ENCODE measurements at regions of chr18 and their contacts with region 1.

Region 1: GRCh38 chr18:32470713-32471633 is at the start of gene GAREM1:
- DNase-seq: peak; percentile 95
- total RNA-seq, gene GAREM1: 10.0 TPM

Region 2: GRCh38 chr18:32158108-32158624 is 312.8 kb before region 1 on chr18:
- intact Hi-C with region 1: loop called (anchors 5 kb)
- DNase-seq: no peak

Region 3: GRCh38 chr18:32271672-32272208 is 199.2 kb before region 1 on chr18:
- intact Hi-C with region 1: loop called (anchors 1 kb)
- DNase-seq: no peak

Region 4: GRCh38 chr18:32289483-32290075 is 181.4 kb before region 1 on chr18:
- intact Hi-C with region 1: loop called (anchors 2 kb)
- DNase-seq: no peak

Region 5: DNA sequence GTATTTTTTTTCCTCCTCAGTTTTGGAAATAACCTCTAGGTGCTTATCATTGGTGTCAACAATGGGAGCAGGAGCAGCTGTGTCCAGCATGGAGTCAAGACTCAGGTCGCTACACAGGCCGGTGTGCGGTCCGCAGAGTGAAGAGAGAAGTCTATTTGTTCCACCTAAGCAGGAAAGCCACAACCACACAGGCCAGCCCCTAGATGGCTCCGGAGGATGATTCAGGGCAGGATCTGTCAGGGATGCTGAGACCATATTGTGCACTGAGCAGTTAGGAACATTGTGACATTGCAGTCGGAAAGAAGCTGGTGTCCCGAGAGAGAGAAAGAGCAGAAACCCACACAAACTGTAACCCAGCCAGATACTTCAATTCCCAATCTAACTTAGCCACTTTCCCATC is 137.2 kb before region 1 on chr18:
- intact Hi-C with region 1: no loop called
- DNase-seq: no peak

Region 6: DNA sequence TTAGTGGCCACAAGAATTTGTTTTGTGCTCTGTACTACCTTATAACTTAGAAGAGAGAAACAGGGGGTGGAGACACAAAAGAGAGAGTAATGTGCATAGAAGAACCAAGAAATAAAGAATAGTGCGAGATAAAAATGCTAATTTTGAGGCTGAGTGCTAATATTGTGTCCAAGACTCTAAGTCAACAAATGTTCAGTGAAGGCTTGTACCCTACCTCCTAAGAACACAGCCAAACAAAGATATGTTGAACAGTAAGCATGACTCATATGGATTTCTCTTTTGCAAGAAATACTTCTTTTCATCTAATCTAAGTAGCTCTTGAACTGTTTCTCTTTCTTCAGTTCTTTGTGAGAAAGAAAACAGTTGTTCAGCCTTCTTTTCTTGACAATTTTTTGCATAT is 45.5 kb before region 1 on chr18:
- intact Hi-C with region 1: loop called (anchors 5 kb)
- DNase-seq: no peak

Region 7: GRCh38 chr18:32549248-32550110 is 78.5 kb after region 1 on chr18:
- intact Hi-C with region 1: loop called (anchors 5 kb)
- DNase-seq: no peak